Body of pancreas (tissue), 4 donors: ENCODE measurements at regions of chr10 and their contacts with region 1.

Region 1: GRCh38 chr10:3208481-3209406 is 36.2 kb upstream of the PITRM1 start:
- DNase-seq: no peak
- ATAC-seq: no peak
- H3K4me3 ChIP-seq: no peak overlapping the region
- H3K27ac ChIP-seq: no peak overlapping the region
- H3K4me1 ChIP-seq: no peaks in the 10 kb centered on the region
- H3K27me3 ChIP-seq: no peaks in the 10 kb centered on the region
- CTCF ChIP-seq: no peak
- POLR2A ChIP-seq: no peak

Region 2: GRCh38 chr10:3136763-3137611 is 71.8 kb before region 1 on chr10:
- intact Hi-C with region 1: no loop called
- DNase-seq: peak in 3 of 4 donors; percentile 25 to 36 (median 26)
- ATAC-seq: peak; percentile 51
- H3K4me3 ChIP-seq: no peak overlapping the region
- H3K27ac ChIP-seq: no peak overlapping the region
- H3K4me1 ChIP-seq: no peaks in the 10 kb centered on the region
- H3K27me3 ChIP-seq: no peaks in the 10 kb centered on the region
- CTCF ChIP-seq: no peak
- POLR2A ChIP-seq: no peak

Region 3: GRCh38 chr10:3376631-3377030 is 167.9 kb after region 1 on chr10:
- intact Hi-C with region 1: no loop called
- DNase-seq: no peak
- ATAC-seq: no peak
- H3K4me3 ChIP-seq: no peak overlapping the region
- H3K27ac ChIP-seq: no peak overlapping the region
- H3K4me1 ChIP-seq: peaks cover 9% of the 10 kb centered on the region
- H3K27me3 ChIP-seq: no peaks in the 10 kb centered on the region
- CTCF ChIP-seq: no peak
- POLR2A ChIP-seq: no peak

Region 4: DNA sequence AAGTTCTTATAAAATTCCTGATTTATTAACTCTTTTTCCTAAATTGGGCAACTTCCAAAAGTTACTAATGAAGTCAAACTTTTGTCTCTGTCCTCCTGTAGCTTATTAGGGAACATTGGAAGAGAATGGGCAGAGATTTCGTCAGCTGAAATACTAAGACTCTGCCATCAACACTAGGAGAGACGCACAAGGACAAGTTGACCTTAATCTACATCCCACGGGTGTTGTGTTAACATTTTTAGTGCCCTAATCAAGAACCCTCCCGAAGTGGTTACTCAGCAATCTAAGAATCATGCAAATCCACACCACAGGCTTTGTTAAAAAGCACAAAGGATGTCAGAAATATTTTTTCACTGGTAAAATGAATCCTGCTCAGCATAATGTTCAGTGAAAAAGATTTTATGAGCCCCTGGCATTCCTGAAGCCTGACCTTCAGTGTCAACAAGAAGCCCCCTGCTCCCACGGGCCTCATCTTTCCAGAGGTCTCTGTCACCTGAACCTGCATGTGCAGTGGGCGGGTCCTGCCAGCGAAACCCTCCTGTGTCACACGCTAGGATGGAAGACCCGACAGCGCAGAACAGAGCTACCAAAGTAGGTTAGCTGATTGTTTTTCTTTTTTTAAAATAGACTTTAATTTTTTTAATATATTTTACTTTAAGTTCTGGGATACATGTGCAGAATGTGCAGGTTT is 1546.7 kb after region 1 on chr10:
- intact Hi-C with region 1: loop called (anchors 10 kb)
- DNase-seq: no peak
- ATAC-seq: no peak
- H3K4me3 ChIP-seq: no peak overlapping the region
- H3K27ac ChIP-seq: no peak overlapping the region
- H3K4me1 ChIP-seq: no peaks in the 10 kb centered on the region
- H3K27me3 ChIP-seq: peaks cover 0 to 8% of the 10 kb centered on the region in 2 donors
- CTCF ChIP-seq: no peak
- POLR2A ChIP-seq: no peak